ENCODE measurements at regions of chr4 and their contacts with region 1.

Region 1: GRCh38 chr4:63221477-63221876 is 1187.8 kb downstream of the TECRL start:
- DNase-seq: no peak
- H3K4me3 ChIP-seq: no peak overlapping the region
- H3K27ac ChIP-seq: no peak overlapping the region
- H3K4me1 ChIP-seq: no peaks in the 10 kb centered on the region
- H3K27me3 ChIP-seq: no peaks in the 10 kb centered on the region
- CTCF ChIP-seq: no peak
- POLR2A ChIP-seq: no peak

Region 2: GRCh38 chr4:63036159-63036866 is 185.2 kb before region 1 on chr4:
- intact Hi-C with region 1: no loop called
- DNase-seq: no peak
- H3K4me3 ChIP-seq: no peak overlapping the region
- H3K27ac ChIP-seq: no peak overlapping the region
- H3K4me1 ChIP-seq: no peaks in the 10 kb centered on the region
- H3K27me3 ChIP-seq: no peaks in the 10 kb centered on the region
- CTCF ChIP-seq: no peak
- POLR2A ChIP-seq: no peak

Region 3: GRCh38 chr4:63080934-63081333 is 140.5 kb before region 1 on chr4:
- intact Hi-C with region 1: loop called (anchors 5 kb)
- DNase-seq: no peak
- H3K4me3 ChIP-seq: no peak overlapping the region
- H3K27ac ChIP-seq: no peak overlapping the region
- H3K4me1 ChIP-seq: no peaks in the 10 kb centered on the region
- H3K27me3 ChIP-seq: no peaks in the 10 kb centered on the region
- CTCF ChIP-seq: no peak
- POLR2A ChIP-seq: no peak

Measured in breast epithelium (tissue), 4 donors.